Left ventricle myocardium superior (tissue), 1 donor: ENCODE measurements at regions of chr2 and their contacts with region 1.

Region 1: DNA sequence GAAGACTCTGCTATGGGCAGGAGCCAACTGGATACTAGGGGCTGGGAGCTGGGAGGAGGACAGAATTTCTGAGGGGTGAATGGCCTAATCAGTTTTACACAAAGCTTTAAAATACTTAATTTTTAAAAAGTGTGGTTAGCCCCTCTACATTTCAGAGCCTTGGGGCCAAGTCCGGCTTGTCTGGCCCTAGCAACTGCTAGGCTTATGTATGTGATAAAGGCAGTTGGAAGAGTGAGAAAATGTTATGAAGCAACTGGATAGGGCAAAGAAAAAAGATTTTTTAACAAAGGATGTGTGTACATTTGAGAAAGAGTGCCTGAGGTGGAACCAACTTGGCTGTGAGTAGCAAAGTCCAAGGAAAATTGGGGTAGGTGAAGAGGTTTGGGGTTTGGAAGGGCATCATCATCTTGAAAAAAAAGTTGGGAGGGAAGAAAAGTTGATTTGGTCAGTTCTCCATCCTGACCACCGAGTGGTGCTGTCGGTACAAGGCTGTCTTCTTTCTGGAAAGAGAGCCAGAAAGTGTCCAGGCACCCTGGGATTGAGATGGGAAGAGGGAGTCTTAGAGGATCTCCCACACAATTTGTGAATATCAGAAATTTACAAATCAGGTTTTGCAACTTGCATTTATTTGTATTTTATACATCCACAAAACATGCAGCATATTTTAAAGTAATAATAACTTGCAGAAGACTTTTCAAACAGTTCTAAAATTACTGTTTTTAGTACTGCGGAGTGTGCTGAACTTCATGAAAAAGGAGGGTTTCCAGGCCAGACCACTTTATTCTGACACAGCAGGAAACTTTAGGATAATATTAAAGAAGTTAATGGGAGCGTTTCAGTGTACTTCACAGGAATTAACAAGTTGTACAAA is 10.5 kb upstream of the CDK15 start:
- DNase-seq: no peak
- ATAC-seq: peak; percentile 66

Region 2: DNA sequence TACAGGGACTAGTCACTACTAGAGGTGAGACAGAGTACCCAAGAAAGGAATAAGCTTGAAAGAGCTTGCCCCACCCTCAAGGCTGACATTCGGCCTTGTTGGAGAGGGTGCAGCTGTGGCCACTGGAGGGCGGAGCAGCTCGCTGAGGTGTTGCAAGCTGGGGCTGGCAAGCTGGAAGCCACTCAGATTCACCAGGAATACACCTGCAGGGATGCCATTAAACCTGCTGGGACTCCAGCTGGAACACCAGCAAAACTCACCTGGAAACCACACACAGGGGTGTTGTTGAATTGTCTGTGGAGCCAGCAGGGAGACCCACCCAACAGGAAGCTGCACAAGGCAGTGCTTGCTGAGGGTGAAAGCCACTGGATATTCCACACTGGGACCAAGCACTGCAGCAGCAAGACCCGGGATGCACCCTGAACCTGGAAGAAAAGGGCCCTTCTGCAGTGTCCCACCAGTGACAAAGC is 1312.1 kb before region 1 on chr2:
- intact Hi-C with region 1: no loop called
- DNase-seq: no peak
- ATAC-seq: no peak

Region 3: GRCh38 chr2:202178342-202178958 is 382.6 kb after region 1 on chr2:
- intact Hi-C with region 1: loop called (anchors 10 kb)
- DNase-seq: no peak
- ATAC-seq: peak; percentile 80